ENCODE measurements at regions of chr1 and their contacts with region 1.

Region 1: GRCh38 chr1:9494929-9495758 is 44.1 kb upstream of the SLC25A33 start:
- DNase-seq: no peak
- H3K4me3 ChIP-seq: peak overlapping the region; percentile 27; the same call in 1 of the 2 replicates
- H3K27me3 ChIP-seq: no peaks in the 10 kb centered on the region; the same call in 1 of the 2 replicates
- CTCF ChIP-seq: peak; percentile 81

Region 2: GRCh38 chr1:9270290-9270883 is 224.8 kb before region 1 on chr1:
- CTCF ChIA-PET with region 1: interaction called, 86 read pairs
- POLR2A ChIA-PET with region 1: no interaction called
- DNase-seq: no peak
- H3K4me3 ChIP-seq: no peak overlapping the region
- H3K27me3 ChIP-seq: no peaks in the 10 kb centered on the region
- CTCF ChIP-seq: no peak

Region 3: GRCh38 chr1:9284061-9284460 is 211.1 kb before region 1 on chr1:
- CTCF ChIA-PET with region 1: interaction called, 82 read pairs
- POLR2A ChIA-PET with region 1: no interaction called
- DNase-seq: no peak
- H3K4me3 ChIP-seq: no peak overlapping the region
- H3K27me3 ChIP-seq: no peaks in the 10 kb centered on the region
- CTCF ChIP-seq: no peak

Region 4: DNA sequence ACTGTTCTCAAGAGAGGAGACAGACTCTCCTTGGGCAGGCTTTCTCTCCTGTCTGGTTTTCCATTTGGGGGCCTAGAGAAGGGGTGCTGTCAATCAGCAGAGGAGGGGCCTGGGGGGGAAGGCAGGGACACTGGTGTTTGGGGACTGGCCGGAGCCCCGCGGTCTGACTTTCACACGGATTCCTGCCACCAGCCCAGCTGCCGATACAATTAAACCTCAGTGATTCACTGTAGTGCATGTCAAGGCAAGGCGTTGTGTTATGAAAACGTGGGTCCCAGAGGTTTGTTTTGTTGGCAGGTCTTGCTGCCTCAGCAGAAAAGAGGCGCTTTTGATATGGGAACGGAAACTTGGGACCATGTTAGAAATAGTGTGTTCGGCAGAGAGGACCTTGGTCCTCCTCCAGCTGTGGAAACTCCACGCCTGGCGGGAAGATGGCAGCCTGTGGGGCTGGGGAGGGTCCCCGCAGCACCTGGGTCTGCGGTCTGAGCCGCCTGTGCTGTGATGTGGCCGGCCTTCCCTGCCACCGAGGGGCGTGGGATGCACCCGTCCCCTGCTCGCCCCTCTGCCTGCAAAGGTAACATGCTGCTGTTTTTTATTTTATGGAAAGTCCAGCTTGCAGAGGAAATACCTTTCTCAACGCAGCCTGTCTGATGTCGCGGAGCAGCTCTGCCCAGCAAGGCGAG is 154.8 kb before region 1 on chr1:
- CTCF ChIA-PET with region 1: no interaction called
- POLR2A ChIA-PET with region 1: no interaction called
- DNase-seq: no peak
- H3K4me3 ChIP-seq: no peak overlapping the region
- H3K27me3 ChIP-seq: no peaks in the 10 kb centered on the region
- CTCF ChIP-seq: no peak

Region 5: DNA sequence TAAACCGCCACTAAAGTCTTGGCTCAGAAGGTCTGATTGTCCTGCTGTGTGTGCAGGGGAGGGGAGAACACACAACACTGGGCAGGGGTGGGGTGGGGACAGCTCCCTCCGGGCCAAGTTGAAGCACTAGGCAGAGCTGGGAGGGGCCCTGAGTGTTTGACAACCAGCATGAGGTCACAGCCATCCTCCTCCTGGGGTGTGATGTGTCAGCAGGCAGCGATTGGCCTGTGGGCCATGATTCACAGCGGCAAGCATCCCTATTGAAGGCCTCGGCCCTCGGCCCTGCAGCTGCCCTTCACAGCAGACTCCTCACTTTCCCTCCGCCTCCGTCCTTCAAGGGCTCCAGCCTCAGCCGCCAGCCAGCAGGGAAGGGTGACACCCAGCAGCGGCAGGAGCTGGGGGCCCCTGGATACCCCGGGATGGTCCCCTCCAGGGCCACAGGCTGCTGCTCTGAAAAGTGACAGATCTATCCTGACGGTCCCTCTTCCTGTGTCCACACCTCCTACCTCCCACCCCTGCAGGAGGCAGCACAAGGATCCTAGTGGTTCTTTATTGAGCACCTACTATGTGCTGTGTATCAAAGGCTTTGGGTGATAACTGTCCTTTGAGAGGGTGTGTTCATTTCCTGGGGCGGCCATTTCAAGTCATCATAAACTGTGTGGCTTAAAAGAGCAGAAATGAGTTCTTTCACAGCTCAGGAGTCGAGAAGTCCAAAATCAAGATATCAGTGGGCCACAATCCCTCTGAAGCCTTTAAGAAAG is 21.9 kb before region 1 on chr1:
- CTCF ChIA-PET with region 1: interaction called, 13 read pairs
- POLR2A ChIA-PET with region 1: no interaction called
- DNase-seq: peak; percentile 92
- H3K4me3 ChIP-seq: no peak overlapping the region
- H3K27me3 ChIP-seq: peaks cover 2% of the 10 kb centered on the region; the same call in 1 of the 2 replicates
- CTCF ChIP-seq: no peak

Measured in BJ (cell line).